PC-3 (cell line): ENCODE measurements at regions of chr4 and their contacts with region 1.

Region 1: DNA sequence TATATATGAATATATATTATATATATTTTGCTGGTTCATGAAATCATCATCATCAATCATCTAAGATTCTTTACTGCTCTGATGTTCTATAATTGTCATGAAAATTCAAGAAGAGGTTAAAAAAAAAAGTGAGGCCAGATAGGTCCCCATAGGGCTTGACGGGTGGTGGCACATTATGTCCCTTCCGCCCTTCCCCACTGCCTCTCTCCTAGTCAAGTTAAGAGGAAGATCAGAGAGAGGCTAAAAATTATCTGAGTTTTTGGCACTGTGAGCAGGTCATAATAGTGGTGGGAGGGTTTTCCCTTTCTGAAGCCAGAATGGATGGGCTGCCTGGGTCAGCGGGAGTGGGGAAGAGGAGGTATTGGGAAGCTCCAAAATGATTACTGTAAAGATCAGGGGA is 5.4 kb downstream of the SYNPO2 start:
- DNase-seq: no peak
- ATAC-seq: no peak
- H3K4me3 ChIP-seq: no peak overlapping the region
- H3K27ac ChIP-seq: no peak overlapping the region
- H3K4me1 ChIP-seq: no peaks in the 10 kb centered on the region
- H3K27me3 ChIP-seq: no peaks in the 10 kb centered on the region
- CTCF ChIP-seq: no peak

Region 2: GRCh38 chr4:118783887-118784286 is 110.1 kb before region 1 on chr4:
- CTCF ChIA-PET with region 1: no interaction called
- POLR2A ChIA-PET with region 1: no interaction called
- intact Hi-C with region 1: no loop called
- DNase-seq: no peak
- ATAC-seq: no peak
- H3K4me3 ChIP-seq: no peak overlapping the region
- H3K27ac ChIP-seq: no peak overlapping the region
- H3K4me1 ChIP-seq: no peaks in the 10 kb centered on the region
- H3K27me3 ChIP-seq: no peaks in the 10 kb centered on the region
- CTCF ChIP-seq: no peak

Region 3: GRCh38 chr4:118954246-118954645 is 60.2 kb after region 1 on chr4:
- CTCF ChIA-PET with region 1: no interaction called
- POLR2A ChIA-PET with region 1: no interaction called
- intact Hi-C with region 1: loop called (anchors 5 kb)
- DNase-seq: peak; percentile 47
- ATAC-seq: peak; percentile 68
- H3K4me3 ChIP-seq: no peak overlapping the region
- H3K27ac ChIP-seq: no peak overlapping the region
- H3K4me1 ChIP-seq: peaks cover 7% of the 10 kb centered on the region; the same call in 1 of the 2 replicates
- H3K27me3 ChIP-seq: no peaks in the 10 kb centered on the region
- CTCF ChIP-seq: peak; percentile 54